CD8-positive, alpha-beta T cell (primary cell): ENCODE measurements at regions of chr12 and their contacts with region 1.

Region 1: DNA sequence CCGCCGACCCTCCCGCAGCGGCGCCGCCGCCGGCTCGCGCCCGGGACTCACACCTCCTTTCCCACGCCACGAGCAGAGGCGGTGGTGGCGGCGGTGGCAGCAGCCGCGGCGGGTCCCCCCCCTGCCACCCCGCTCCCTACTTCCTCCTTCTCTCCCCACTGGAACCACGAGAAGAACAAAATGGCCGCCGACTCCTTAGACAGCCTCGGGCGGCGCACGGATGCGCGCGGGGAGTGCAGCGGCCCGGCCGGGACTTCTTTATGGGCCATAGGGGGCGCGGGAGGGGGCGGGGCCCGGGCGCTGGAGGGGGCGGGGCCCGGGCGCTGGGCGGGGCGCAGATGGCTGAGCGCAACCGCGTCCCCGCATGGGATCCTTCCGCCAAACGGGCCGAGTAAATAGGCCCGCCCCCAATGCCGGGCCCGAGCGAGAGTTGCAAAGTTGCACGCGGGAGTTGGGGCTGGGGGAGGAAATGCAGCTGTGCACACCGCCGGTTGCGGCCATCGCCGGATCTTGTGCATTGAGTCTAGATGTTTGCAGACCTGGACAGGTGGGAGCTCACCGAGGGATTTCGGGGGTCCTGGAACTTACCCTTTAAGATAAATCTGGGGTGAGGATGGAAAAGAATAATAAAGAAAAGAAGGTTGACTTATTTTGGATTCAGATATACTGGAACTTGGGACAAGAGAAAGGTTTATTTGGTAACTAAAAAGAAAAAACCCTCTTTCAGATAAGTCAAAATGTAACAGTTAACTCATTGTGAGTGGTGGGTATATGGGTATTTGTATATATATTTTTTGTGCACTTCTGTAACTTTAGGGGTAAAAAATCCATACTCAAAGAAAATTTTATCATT is at the start of gene PPP1CC:
- DNase-seq: peak; percentile 83 to 97 (median 91)
- ATAC-seq: peak; percentile 94
- H3K4me3 ChIP-seq: peak within 1 kb of the TSS; percentile 63 to 77
- H3K4me3 Mint-ChIP-seq: peak within 1 kb of the TSS; percentile 99
- H3K27ac ChIP-seq: peak within 1 kb of the TSS; percentile 60 to 69
- H3K27ac Mint-ChIP-seq: peak within 1 kb of the TSS; percentile 97
- H3K4me1 ChIP-seq: peaks cover 37% of the 10 kb centered on the region
- H3K4me1 Mint-ChIP-seq: peaks cover 40% of the 10 kb centered on the region
- H3K27me3 ChIP-seq: no peaks in the 10 kb centered on the region
- H3K27me3 Mint-ChIP-seq: no peaks in the 10 kb centered on the region
- CTCF ChIP-seq: no peak
- total RNA-seq, gene PPP1CC: 147 to 158 TPM

Region 2: GRCh38 chr12:109713187-109713984 is 1029.6 kb before region 1 on chr12 and contains the start of gene FAM222A:
- CTCF ChIA-PET with region 1: no interaction called
- POLR2A ChIA-PET with region 1: no interaction called
- intact Hi-C with region 1: loop called in 1 of 2 experiments (anchors 5 kb)
- DNase-seq: peak; percentile 95 to 99 (median 98)
- ATAC-seq: peak; percentile 88
- H3K4me3 ChIP-seq: peak within 1 kb of the TSS; percentile 54 to 55
- H3K4me3 Mint-ChIP-seq: peak within 1 kb of the TSS; percentile 81
- H3K27ac ChIP-seq: no peak within 1 kb of the TSS
- H3K27ac Mint-ChIP-seq: no peak within 1 kb of the TSS
- H3K4me1 ChIP-seq: peaks cover 11% of the 10 kb centered on the region
- H3K4me1 Mint-ChIP-seq: no peaks in the 10 kb centered on the region
- H3K27me3 ChIP-seq: peaks cover 0 to 3% of the 10 kb centered on the region in 2 experiments
- H3K27me3 Mint-ChIP-seq: peaks cover 40% of the 10 kb centered on the region
- CTCF ChIP-seq: no peak
- total RNA-seq, gene FAM222A: 4.4 to 5.3 TPM

Region 3: GRCh38 chr12:110403146-110403975 is 339.6 kb before region 1 on chr12 and contains the start of gene ANAPC7:
- CTCF ChIA-PET with region 1: no interaction called
- POLR2A ChIA-PET with region 1: no interaction called
- intact Hi-C with region 1: loop called in 1 of 2 experiments (anchors 1 kb)
- DNase-seq: peak; percentile 69 to 93 (median 87)
- ATAC-seq: peak; percentile 96
- H3K4me3 ChIP-seq: peak within 1 kb of the TSS; percentile 87 to 89
- H3K4me3 Mint-ChIP-seq: peak within 1 kb of the TSS; percentile 100
- H3K27ac ChIP-seq: peak within 1 kb of the TSS; percentile 78 to 96
- H3K27ac Mint-ChIP-seq: peak within 1 kb of the TSS; percentile 98
- H3K4me1 ChIP-seq: peaks cover 20% of the 10 kb centered on the region
- H3K4me1 Mint-ChIP-seq: peaks cover 33% of the 10 kb centered on the region
- H3K27me3 ChIP-seq: no peaks in the 10 kb centered on the region
- H3K27me3 Mint-ChIP-seq: no peaks in the 10 kb centered on the region
- CTCF ChIP-seq: no peak
- total RNA-seq, gene ANAPC7: 22.1 to 23.2 TPM

Region 4: DNA sequence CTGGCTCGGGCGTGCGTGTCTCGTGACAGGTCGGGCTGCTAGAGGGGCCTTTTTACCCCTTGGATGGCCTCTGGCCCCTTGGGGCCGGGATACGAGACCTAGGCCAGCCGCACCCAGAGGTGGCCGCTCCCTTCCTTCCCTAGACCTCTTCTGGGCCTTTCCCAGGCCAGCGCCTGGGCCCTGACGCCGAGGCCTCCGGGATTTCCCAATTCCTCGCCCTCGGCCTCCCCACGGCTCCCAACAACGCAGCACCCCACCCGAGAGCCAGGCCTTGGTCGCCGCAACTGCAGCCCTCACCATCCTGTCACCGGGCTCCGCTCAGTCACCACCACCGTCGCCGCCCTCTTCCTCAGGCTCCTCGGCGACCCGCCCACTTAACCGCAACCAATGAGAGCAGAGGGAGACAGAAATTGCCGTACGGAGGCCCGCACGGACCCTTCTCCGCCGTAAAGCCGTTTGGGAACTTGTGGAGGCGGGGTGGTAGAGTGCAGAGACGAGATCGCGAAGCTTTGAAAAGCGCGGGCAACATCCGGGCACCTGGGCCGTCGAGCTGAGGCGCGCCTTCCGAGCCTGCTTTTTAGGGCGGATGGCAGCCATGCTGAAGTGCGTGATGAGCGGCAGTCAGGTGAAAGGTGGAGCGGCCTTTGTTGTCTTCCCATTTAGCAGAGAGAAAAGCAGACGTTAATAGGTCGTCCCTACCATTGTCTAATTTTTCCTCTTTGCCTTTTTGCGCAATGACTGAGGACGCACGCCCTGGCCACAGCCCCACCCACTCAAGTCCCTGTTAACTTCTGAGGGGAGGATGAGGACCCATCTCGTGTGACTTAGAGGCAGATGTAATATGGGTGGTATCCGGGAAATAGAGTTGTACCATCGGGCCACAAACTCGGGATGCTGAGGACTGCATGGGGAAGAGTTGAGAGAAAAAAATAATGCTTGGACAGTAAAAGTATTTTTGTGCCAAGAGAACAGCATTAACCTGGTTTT is 240.9 kb before region 1 on chr12 and contains the starts of genes RAD9B and VPS29:
- CTCF ChIA-PET with region 1: no interaction called
- POLR2A ChIA-PET with region 1: interaction called, 3 read pairs
- intact Hi-C with region 1: loop called in 1 of 2 experiments (anchors 1 kb)
- DNase-seq: peak; percentile 98 to 100 (median 99)
- ATAC-seq: peak; percentile 92
- H3K4me3 ChIP-seq: peak within 1 kb of the TSS; percentile 73 to 79
- H3K4me3 Mint-ChIP-seq: peak within 1 kb of the TSS; percentile 97
- H3K27ac ChIP-seq: peak within 1 kb of the TSS; percentile 74 to 89
- H3K27ac Mint-ChIP-seq: peak within 1 kb of the TSS; percentile 97
- H3K4me1 ChIP-seq: peaks cover 17% of the 10 kb centered on the region
- H3K4me1 Mint-ChIP-seq: peaks cover 38% of the 10 kb centered on the region
- H3K27me3 ChIP-seq: no peaks in the 10 kb centered on the region
- H3K27me3 Mint-ChIP-seq: no peaks in the 10 kb centered on the region
- CTCF ChIP-seq: no peak
- total RNA-seq, gene RAD9B: 0.57 to 1.5 TPM
- total RNA-seq, gene VPS29: 49.6 to 53.5 TPM

Region 5: DNA sequence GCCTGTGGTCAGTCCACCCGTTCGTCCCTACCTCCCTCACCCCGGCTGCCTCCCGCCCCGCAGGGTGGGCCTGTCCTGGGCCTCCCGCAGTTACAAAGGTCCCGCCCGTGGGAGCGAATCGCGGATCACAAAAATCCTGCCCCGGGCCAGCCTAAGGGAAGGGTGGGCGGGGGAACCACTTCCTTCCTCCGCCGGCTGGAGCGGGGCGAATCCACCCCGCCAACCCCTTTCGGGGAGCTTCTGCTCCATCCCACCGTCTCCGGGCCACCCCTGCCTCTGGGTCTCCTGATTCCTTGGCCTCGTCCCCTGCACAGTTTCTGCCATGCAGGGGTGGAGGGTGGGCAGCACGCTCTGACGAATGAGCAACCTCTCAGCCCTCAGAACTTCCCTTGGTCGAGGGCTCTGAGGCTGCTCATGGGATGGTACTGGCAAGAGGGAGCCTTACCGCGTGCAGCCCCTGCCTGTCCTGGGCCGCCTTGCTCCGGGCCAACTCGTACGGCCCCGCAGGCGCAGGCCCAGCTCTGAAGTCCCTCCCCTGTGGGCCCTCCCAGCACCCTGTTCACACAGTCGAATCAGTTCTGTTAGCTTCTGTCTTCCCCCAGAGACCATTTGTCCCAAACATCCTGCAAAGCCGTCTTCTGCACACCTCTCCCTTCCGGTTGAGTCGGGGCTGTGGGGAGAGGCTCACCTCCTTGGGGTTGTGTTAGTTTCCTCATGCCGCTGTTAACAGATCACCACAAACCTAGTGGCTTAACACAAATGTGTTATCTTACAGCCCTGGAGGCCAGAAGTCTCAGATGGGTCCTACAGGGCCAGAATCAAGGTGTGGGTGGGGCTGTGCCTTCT is 53.4 kb before region 1 on chr12:
- CTCF ChIA-PET with region 1: interaction called, 4 read pairs
- POLR2A ChIA-PET with region 1: no interaction called
- intact Hi-C with region 1: loop called in 1 of 2 experiments (anchors 1 kb)
- DNase-seq: peak in 8 of 9 experiments; percentile 44 to 80 (median 61)
- ATAC-seq: peak; percentile 69
- H3K4me3 ChIP-seq: peak overlapping the region; percentile 74 to 81
- H3K4me3 Mint-ChIP-seq: peak overlapping the region; percentile 83
- H3K27ac ChIP-seq: peak overlapping the region; percentile 49 to 70
- H3K27ac Mint-ChIP-seq: peak overlapping the region; percentile 85
- H3K4me1 ChIP-seq: peaks cover 21% of the 10 kb centered on the region
- H3K4me1 Mint-ChIP-seq: peaks cover 35% of the 10 kb centered on the region
- H3K27me3 ChIP-seq: no peaks in the 10 kb centered on the region
- H3K27me3 Mint-ChIP-seq: no peaks in the 10 kb centered on the region
- CTCF ChIP-seq: no peak

Region 6: DNA sequence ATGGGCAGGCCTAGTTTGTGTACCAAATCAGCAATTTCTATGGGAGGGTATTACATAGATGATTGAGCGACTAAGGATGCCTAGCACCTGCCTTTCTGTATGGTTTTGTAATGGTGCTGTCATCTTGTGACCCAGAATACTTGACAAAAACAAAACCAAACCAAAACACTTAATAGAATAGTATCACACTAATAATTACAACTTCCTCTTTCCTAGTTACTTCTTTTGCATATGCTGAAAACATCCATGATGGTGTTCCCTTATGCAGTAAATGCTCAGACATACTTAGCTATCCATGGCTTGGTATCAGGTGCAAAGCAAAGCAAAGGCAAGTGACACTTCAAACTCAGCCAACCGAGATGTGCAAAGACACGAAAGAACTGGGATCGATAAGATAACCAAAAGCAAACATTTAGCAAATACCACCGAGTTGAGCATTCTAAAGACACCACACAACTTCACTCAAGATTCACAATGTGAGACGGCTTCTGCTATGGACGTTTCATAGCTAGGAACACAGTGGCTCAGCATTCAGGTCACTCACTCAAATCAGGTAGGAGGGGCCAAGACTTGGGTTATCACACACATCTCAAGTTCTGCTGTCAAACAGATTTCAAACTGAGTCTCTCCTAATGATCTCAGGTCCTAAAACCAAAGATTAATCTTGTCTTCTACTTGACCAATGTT is 24.6 kb before region 1 on chr12:
- CTCF ChIA-PET with region 1: no interaction called
- POLR2A ChIA-PET with region 1: no interaction called
- intact Hi-C with region 1: no loop called
- DNase-seq: no peak
- ATAC-seq: no peak
- H3K4me3 ChIP-seq: no peak overlapping the region
- H3K4me3 Mint-ChIP-seq: no peak overlapping the region
- H3K27ac ChIP-seq: no peak overlapping the region
- H3K27ac Mint-ChIP-seq: peak overlapping the region; percentile 30
- H3K4me1 ChIP-seq: no peaks in the 10 kb centered on the region
- H3K4me1 Mint-ChIP-seq: no peaks in the 10 kb centered on the region
- H3K27me3 ChIP-seq: no peaks in the 10 kb centered on the region
- H3K27me3 Mint-ChIP-seq: no peaks in the 10 kb centered on the region
- CTCF ChIP-seq: no peak

Region 7: DNA sequence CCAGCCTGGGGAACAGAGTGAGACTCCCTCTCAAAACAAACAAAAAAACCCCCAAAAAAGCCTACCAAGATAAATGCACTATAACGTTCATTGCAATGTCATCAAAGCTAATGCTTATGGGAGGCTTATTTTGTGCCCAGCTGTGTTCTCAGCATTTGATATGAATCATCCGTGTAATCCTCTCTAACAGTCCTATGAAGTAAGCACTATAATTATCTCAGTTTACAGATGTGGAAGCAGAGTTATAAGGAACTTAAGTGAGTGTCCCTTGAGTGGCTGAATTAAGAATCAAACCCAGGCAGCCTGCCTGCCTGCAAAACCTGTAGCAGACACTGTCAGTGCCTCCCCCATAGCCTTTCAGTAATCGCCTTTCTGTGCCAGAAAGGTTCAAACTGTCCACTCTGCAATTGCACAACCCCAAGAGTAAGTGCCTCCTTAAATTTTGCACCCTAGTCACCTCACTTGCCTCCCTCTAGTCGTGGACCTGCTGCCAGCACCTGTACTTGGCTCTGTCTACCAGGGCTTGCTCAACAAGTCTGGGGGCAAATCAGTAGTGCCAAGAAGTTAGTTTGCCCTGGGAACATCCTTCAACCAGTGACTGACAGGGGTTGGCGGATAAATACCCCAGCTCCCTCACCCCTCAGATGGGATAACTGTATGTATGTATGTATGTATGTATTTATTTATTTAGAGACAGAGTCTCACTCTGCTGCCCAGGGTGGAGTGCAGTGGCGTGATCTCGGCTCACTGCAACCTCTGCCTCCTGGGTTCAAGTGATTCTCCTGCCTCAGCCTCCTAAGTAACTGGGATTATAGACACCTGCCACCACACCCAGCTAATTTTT is 23.6 kb after region 1 on chr12:
- CTCF ChIA-PET with region 1: no interaction called
- POLR2A ChIA-PET with region 1: no interaction called
- intact Hi-C with region 1: no loop called
- DNase-seq: no peak
- ATAC-seq: no peak
- H3K4me3 ChIP-seq: no peak overlapping the region
- H3K4me3 Mint-ChIP-seq: no peak overlapping the region
- H3K27ac ChIP-seq: no peak overlapping the region
- H3K27ac Mint-ChIP-seq: no peak overlapping the region
- H3K4me1 ChIP-seq: no peaks in the 10 kb centered on the region
- H3K4me1 Mint-ChIP-seq: no peaks in the 10 kb centered on the region
- H3K27me3 ChIP-seq: no peaks in the 10 kb centered on the region
- H3K27me3 Mint-ChIP-seq: no peaks in the 10 kb centered on the region
- CTCF ChIP-seq: no peak

Region 8: DNA sequence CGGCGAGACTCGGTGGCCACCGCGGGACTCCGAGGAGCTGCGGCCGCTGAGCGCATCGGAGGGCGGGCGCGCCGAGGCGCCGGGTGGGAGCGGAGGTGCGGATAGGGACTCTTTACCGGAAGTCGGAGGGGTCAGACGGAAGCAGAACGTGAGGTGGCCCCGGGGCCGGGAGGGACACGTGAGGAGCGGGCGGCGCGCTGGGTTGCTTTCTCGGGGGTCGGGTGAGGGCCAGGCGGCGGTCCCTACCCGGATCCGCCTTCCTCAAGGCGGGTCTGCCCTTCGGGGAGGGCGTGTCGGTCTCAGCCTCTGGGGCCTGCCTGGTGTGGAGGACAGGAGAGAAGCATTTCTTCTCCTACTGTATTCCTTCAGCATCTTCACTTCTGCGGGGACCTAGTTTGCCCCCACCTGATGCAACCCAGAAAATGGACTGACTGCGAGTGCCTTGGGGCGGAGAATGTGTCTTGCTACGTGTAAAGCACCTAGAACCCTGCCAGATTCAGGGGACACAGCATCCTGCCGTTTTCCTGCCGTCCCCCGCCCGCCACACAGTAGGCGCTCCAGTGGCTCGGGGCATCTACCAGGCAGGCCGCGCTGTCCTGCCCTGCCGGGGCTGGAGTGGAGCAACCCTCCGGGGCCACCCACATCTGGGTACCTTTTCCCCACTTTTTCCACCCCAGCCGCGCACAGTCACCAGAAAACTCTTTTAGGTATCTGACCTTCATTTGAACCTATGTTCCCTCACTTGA is 856.7 kb after region 1 on chr12:
- CTCF ChIA-PET with region 1: no interaction called
- POLR2A ChIA-PET with region 1: no interaction called
- intact Hi-C with region 1: loop called in 1 of 2 experiments (anchors 5 kb)
- DNase-seq: peak; percentile 70 to 95 (median 87)
- ATAC-seq: peak; percentile 75
- H3K4me3 ChIP-seq: peak overlapping the region; percentile 68 to 97
- H3K4me3 Mint-ChIP-seq: peak overlapping the region; percentile 90
- H3K27ac ChIP-seq: peak overlapping the region; percentile 72 to 77
- H3K27ac Mint-ChIP-seq: peak overlapping the region; percentile 91
- H3K4me1 ChIP-seq: peaks cover 20% of the 10 kb centered on the region
- H3K4me1 Mint-ChIP-seq: peaks cover 34% of the 10 kb centered on the region
- H3K27me3 ChIP-seq: no peaks in the 10 kb centered on the region
- H3K27me3 Mint-ChIP-seq: no peaks in the 10 kb centered on the region
- CTCF ChIP-seq: no peak